ENCODE measurements at regions of chr10 and their contacts with region 1.

Region 1: DNA sequence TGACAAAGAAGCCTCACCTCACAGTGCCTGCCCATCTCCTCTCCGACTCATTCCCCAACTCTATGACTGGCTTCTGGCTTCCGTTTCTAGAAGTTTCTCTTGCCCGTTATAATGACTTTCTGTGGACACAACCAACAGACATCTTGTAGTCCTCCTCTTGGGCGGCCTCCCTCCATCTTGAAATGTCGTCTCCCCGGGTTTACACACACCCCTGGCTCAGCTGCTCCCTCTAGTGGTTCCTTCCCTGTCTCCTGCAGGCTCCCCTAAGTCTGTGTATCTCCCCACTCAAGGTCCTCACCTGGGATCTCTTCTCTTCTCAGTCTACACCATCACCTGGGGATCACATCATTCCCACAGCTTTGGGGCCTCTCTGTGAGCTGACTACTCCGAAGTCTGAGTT is 123.4 kb upstream of the NEBL start:
- DNase-seq: peak in 2 of 5 donors; percentile 37 to 38
- ATAC-seq: peak in 3 of 4 donors; percentile 52 to 68 (median 54)
- H3K4me3 ChIP-seq: no peak overlapping the region
- H3K27ac ChIP-seq: no peak overlapping the region
- H3K4me1 ChIP-seq: peaks cover 0 to 12% (median 0%) of the 10 kb centered on the region in 12 donors
- H3K27me3 ChIP-seq: no peaks in the 10 kb centered on the region
- CTCF ChIP-seq: peak in 8 of 12 donors; percentile 13 to 42 (median 28)
- POLR2A ChIP-seq: no peak

Region 2: GRCh38 chr10:20598590-20598989 is 422.0 kb before region 1 on chr10:
- intact Hi-C with region 1: no loop called
- DNase-seq: peak; percentile 38 to 83 (median 72)
- ATAC-seq: peak; percentile 81 to 99 (median 94)
- H3K4me3 ChIP-seq: no peak overlapping the region
- H3K27ac ChIP-seq: peak overlapping the region in 3 of 12 donors; percentile 1 to 41 (median 19)
- H3K4me1 ChIP-seq: peaks cover 0 to 28% (median 12%) of the 10 kb centered on the region in 12 donors
- H3K27me3 ChIP-seq: no peaks in the 10 kb centered on the region
- CTCF ChIP-seq: no peak
- POLR2A ChIP-seq: no peak

Region 3: DNA sequence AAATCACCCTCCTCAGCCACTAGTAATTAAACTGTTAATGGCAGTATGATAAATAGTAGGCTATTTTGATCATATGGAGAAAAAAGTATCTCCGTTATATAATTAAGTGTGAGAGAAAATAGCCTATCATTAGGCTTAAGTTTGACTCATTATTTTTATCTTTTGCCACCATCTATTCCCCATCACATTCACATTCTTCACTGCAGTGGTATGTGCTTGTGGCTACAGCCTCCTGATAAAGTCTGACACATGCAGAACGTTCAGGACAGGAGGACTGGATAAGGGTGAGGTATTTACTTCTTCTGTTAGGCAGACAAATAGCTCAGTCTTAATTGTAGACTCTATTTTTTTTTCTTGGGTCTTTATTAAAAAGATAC is 129.2 kb before region 1 on chr10:
- intact Hi-C with region 1: loop called in 1 of 10 experiments (anchors 5 kb)
- DNase-seq: no peak
- ATAC-seq: peak; percentile 39 to 56 (median 48)
- H3K4me3 ChIP-seq: peak overlapping the region in 10 of 12 donors; percentile 6 to 67 (median 46)
- H3K27ac ChIP-seq: peak overlapping the region in 11 of 12 donors; percentile 35 to 95 (median 84)
- H3K4me1 ChIP-seq: peaks cover 0 to 19% (median 0%) of the 10 kb centered on the region in 12 donors
- H3K27me3 ChIP-seq: no peaks in the 10 kb centered on the region
- CTCF ChIP-seq: no peak
- POLR2A ChIP-seq: no peak

Region 4: GRCh38 chr10:20922451-20922850 is 98.1 kb before region 1 on chr10:
- intact Hi-C with region 1: loop called in 1 of 10 experiments (anchors 10 kb)
- DNase-seq: no peak
- ATAC-seq: no peak
- H3K4me3 ChIP-seq: no peak overlapping the region
- H3K27ac ChIP-seq: no peak overlapping the region
- H3K4me1 ChIP-seq: no peaks in the 10 kb centered on the region
- H3K27me3 ChIP-seq: no peaks in the 10 kb centered on the region
- CTCF ChIP-seq: no peak
- POLR2A ChIP-seq: no peak

Measured in heart left ventricle (tissue), 16 donors.